Sciatic nerve (tissue), 2 donors: ENCODE measurements at regions of chr11 and their contacts with region 1.

Region 1: DNA sequence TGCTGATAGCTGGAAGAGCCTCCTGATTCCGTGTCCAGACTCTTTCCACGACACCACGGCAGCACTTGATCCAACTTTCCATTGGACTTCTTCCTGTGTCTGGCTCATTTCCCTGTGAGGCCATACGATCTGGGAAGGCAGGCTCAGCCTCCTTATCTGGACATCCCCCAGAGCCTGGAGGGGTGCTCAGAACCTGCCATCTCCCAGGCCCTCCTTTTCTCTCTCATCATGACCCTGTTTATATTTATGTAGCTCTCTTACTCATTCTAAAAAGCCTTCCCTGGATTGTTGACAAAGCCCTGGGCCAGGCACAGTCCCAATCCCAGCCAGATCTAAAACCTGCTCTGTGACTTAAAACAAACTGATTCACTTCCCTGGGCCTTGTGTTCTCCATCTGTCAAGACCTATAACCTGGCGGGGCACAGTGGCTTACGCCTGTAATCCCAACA is 7.8 kb upstream of the BCL9L start:
- DNase-seq: no peak
- ATAC-seq: peak; percentile 0

Region 2: DNA sequence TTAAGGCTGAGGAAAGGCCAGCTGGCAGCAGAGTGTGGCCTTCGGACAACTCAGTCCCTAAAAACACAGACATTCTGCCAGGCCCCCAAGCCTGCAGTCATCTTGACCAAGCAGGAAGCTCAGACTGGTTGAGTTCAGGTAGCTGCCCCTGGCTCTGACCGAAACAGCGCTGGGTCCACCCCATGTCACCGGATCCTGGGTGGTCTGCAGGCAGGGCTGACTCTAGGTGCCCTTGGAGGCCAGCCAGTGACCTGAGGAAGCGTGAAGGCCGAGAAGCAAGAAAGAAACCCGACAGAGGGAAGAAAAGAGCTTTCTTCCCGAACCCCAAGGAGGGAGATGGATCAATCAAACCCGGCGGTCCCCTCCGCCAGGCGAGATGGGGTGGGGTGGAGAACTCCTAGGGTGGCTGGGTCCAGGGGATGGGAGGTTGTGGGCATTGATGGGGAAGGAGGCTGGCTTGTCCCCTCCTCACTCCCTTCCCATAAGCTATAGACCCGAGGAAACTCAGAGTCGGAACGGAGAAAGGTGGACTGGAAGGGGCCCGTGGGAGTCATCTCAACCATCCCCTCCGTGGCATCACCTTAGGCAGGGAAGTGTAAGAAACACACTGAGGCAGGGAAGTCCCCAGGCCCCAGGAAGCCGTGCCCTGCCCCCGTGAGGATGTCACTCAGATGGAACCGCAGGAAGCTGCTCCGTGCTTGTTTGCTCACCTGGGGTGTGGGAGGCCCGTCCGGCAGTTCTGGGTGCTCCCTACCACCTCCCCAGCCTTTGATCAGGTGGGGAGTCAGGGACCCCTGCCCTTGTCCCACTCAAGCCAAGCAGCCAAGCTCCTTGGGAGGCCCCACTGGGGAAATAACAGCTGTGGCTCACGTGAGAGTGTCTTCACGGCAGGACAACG is 38.1 kb before region 1 on chr11:
- intact Hi-C with region 1: loop called (anchors 2 kb)
- DNase-seq: no peak
- ATAC-seq: peak; percentile 29